Activated CD4-positive, alpha-beta T cell treated with anti-CD3 and anti-CD28 coated beads, Interleukin-2, amount 10 ng/mL, durations not matched to agents 24 days and 14 days (primary cell): ENCODE measurements at regions of chr16 and their contacts with region 1.

Region 1: GRCh38 chr16:70438969-70439862 is at the start of gene ST3GAL2:
- DNase-seq: peak; percentile 98
- H3K4me3 Mint-ChIP-seq: peak within 1 kb of the TSS; percentile 100
- H3K27ac Mint-ChIP-seq: peak within 1 kb of the TSS; percentile 96
- H3K4me1 Mint-ChIP-seq: peaks cover 26% of the 10 kb centered on the region
- H3K27me3 Mint-ChIP-seq: no peaks in the 10 kb centered on the region
- total RNA-seq, gene ST3GAL2: 27.9 and 37.0 TPM in 2 replicates

Region 2: GRCh38 chr16:70402916-70403659 is 36.1 kb before region 1 on chr16:
- intact Hi-C with region 1: loop called (anchors 1 kb)
- DNase-seq: no peak
- H3K4me3 Mint-ChIP-seq: no peak overlapping the region
- H3K27ac Mint-ChIP-seq: peak overlapping the region; percentile 89
- H3K4me1 Mint-ChIP-seq: peaks cover 41% of the 10 kb centered on the region
- H3K27me3 Mint-ChIP-seq: no peaks in the 10 kb centered on the region

Region 3: DNA sequence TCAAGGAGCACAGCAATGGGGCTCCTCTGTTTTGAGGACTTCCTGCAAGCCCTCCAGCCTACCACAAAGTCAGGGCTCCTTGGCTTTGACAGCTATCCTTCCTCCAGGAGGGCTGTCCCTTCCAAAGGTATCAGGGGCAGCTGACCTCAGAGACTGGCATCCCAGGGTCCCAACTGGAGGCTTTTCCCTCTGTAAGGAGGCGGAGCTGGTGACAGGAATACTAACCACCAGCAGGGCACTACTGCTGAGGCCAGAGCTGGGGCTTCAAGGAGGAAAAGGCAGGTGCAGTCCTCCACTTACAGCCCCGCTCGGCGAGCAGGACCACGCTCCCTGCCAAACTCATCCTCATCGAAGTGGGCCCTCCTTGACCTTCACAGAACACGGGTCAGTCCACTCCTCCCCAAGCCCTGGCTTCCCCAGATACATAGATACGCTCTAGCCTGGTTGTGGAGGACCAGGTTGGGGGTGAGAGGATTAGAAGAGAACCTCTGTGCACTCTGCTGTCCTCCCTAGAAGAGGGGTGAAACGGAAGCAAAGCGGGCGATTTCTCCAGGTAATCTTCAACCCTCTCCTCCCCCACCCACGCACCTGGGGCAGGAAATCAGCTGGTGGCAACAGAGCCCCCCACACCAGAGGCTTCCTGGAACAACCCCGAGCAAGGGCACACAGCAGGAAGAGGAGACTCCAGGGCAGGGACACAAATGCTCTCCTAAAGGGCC is 20.8 kb before region 1 on chr16:
- intact Hi-C with region 1: loop called (anchors 2 kb)
- DNase-seq: no peak
- H3K4me3 Mint-ChIP-seq: peak overlapping the region; percentile 61
- H3K27ac Mint-ChIP-seq: peak overlapping the region; percentile 68
- H3K4me1 Mint-ChIP-seq: peaks cover 39% of the 10 kb centered on the region
- H3K27me3 Mint-ChIP-seq: no peaks in the 10 kb centered on the region

Region 4: GRCh38 chr16:70428178-70428998 is 10.8 kb before region 1 on chr16:
- intact Hi-C with region 1: loop called (anchors 1 kb)
- DNase-seq: peak; percentile 83
- H3K4me3 Mint-ChIP-seq: peak overlapping the region; percentile 56
- H3K27ac Mint-ChIP-seq: peak overlapping the region; percentile 67
- H3K4me1 Mint-ChIP-seq: peaks cover 56% of the 10 kb centered on the region
- H3K27me3 Mint-ChIP-seq: no peaks in the 10 kb centered on the region

Region 5: GRCh38 chr16:70454222-70455034 is 15.2 kb after region 1 on chr16 and contains the start of gene FCSK:
- intact Hi-C with region 1: loop called (anchors 1 kb)
- DNase-seq: peak; percentile 90
- H3K4me3 Mint-ChIP-seq: peak within 1 kb of the TSS; percentile 85
- H3K27ac Mint-ChIP-seq: peak within 1 kb of the TSS; percentile 88
- H3K4me1 Mint-ChIP-seq: peaks cover 14% of the 10 kb centered on the region
- H3K27me3 Mint-ChIP-seq: peaks cover 1% of the 10 kb centered on the region
- total RNA-seq, gene FCSK: 19.6 and 24.4 TPM in 2 replicates

Region 6: DNA sequence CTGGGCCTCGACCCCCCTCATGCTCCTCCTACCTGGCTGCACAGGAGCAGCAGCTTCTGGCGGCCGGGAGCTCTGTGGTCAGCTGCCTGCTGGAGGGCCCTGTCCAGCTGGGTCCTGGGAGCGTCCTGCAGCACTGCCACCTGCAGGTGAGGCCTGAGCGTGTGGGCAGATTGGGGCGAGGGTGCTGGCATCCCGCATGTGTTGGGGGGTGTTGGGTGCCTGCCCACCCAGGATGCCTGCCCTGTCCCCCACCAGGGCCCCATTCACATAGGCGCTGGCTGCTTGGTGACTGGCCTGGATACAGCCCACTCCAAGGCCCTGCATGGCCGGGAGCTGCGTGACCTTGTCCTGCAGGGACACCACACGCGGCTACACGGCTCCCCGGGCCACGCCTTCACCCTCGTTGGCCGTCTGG is 31.7 kb after region 1 on chr16:
- intact Hi-C with region 1: no loop called
- DNase-seq: no peak
- H3K4me3 Mint-ChIP-seq: no peak overlapping the region
- H3K27ac Mint-ChIP-seq: no peak overlapping the region
- H3K4me1 Mint-ChIP-seq: peaks cover 2% of the 10 kb centered on the region
- H3K27me3 Mint-ChIP-seq: no peaks in the 10 kb centered on the region